Aorta (tissue), 5 donors: ENCODE measurements at regions of chr15 and their contacts with region 1.

Region 1: GRCh38 chr15:101540480-101541239 is 51.2 kb upstream of the PCSK6 start:
- DNase-seq: peak in 1 of 2 donors; percentile 71
- ATAC-seq: no peak
- H3K4me3 ChIP-seq: no peak overlapping the region
- H3K27ac ChIP-seq: no peak overlapping the region
- H3K4me1 ChIP-seq: no peaks in the 10 kb centered on the region
- H3K27me3 ChIP-seq: no peaks in the 10 kb centered on the region

Region 2: DNA sequence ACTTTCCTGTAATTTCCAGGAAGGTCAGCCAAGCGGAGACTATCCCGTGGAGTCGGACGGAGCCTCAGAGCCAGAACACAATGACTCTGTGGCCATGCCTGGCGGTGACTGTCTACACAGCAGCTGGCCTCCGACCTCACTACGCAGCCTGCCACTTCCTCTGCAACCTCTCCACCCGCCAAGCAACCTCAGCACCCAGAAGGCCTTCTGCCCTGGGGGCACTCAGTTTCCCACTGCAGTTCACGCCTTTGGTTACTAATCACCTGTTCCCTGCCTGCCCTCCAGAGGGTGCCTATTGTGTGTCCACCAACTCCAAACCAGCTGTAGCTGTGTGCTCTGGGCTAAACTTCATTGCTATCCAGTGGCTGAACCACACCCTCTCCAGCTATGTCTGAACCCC is 67.5 kb after region 1 on chr15:
- intact Hi-C with region 1: loop called in 1 of 2 experiments (anchors 10 kb)
- DNase-seq: no peak
- ATAC-seq: no peak
- H3K4me3 ChIP-seq: no peak overlapping the region
- H3K27ac ChIP-seq: no peak overlapping the region
- H3K4me1 ChIP-seq: no peaks in the 10 kb centered on the region
- H3K27me3 ChIP-seq: no peaks in the 10 kb centered on the region

Region 3: DNA sequence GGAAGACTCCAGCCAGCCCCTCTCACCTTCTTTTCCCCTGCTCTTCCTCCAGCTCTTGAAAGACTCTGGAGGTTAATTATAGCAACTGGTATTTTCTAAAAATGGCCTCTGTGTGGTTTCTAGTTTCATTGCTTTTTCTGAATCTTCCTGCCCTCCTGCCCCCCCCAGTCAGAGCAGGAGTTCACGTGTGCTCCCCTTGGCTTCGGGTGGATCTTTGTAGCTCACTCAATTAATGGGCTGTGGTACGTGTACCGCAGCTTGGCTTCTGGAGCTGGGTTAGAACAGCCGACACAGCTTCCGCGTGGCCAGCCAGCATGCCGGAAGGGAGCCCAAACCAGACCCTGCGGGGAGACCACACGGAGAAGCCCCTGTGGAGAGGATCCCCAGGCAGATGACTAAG is 80.0 kb after region 1 on chr15:
- intact Hi-C with region 1: no loop called
- DNase-seq: no peak
- ATAC-seq: no peak
- H3K4me3 ChIP-seq: no peak overlapping the region
- H3K27ac ChIP-seq: no peak overlapping the region
- H3K4me1 ChIP-seq: no peaks in the 10 kb centered on the region
- H3K27me3 ChIP-seq: no peaks in the 10 kb centered on the region